CD8-positive, alpha-beta T cell (primary cell): ENCODE measurements at regions of chr6 and their contacts with region 1.

Region 1: GRCh38 chr6:108835218-108835850 is 12.9 kb upstream of the ARMC2 start:
- DNase-seq: peak; percentile 66 to 90 (median 85)
- ATAC-seq: peak; percentile 99
- H3K4me3 ChIP-seq: no peak overlapping the region
- H3K4me3 Mint-ChIP-seq: no peak overlapping the region
- H3K27ac ChIP-seq: no peak overlapping the region
- H3K27ac Mint-ChIP-seq: no peak overlapping the region
- H3K4me1 ChIP-seq: peaks cover 14% of the 10 kb centered on the region
- H3K4me1 Mint-ChIP-seq: peaks cover 23% of the 10 kb centered on the region
- H3K27me3 ChIP-seq: no peaks in the 10 kb centered on the region
- H3K27me3 Mint-ChIP-seq: no peaks in the 10 kb centered on the region
- CTCF ChIP-seq: peak; percentile 89

Region 2: DNA sequence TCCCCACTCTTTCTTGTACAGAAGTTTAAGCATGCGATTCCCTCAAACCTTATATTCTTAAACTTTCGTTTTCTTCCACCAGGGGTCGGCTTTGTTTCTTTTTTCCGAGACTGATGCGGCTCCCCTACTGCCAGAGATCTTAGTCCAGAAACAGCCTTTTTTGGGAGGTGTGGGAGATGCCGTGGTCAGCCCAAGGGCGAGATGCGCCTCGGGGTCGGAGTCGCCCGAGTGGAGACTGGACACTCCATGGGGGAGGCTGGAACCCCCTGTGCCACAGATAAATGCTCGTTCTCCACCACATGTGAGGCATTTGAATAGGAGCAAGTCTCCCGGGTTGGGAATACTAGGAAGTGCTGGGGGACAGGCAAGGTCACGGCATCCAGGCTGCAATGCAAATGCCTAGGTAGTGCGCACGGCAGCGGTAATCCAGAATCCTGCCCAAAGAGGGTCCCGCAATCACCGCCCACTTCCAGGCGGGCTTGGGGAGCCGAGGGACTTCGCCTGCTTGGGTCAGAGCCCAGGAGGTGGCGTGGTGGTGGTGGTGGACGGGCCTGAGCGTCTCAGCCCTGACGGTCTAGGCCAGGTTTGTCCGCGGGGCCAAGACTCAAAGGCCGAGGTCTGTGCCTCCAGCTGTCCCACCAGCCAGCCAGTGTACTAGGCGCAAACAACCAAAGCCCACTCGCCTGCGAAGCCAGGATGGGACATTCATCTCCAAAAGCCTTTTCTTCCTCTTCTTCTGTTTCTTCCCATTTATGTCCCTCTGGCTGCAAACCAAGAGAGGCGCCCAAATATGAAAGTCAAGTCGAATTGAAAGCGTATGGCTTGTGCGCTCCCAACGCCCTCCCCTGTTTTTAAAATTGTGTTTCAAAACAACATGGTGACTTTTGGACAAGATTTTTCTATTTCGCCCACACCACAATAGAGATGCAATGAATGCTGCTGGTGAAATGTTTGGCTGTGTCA is 721.5 kb before region 1 on chr6:
- CTCF ChIA-PET with region 1: no interaction called
- POLR2A ChIA-PET with region 1: no interaction called
- intact Hi-C with region 1: loop called in 1 of 2 experiments (anchors 10 kb)
- DNase-seq: peak in 2 of 9 experiments; percentile 43 to 49
- ATAC-seq: no peak
- H3K4me3 ChIP-seq: peak overlapping the region in 1 of 2 experiments; percentile 29
- H3K4me3 Mint-ChIP-seq: peak overlapping the region; percentile 64
- H3K27ac ChIP-seq: no peak overlapping the region
- H3K27ac Mint-ChIP-seq: no peak overlapping the region
- H3K4me1 ChIP-seq: peaks cover 40% of the 10 kb centered on the region
- H3K4me1 Mint-ChIP-seq: peaks cover 41% of the 10 kb centered on the region
- H3K27me3 ChIP-seq: peaks cover 36 to 43% of the 10 kb centered on the region in 2 experiments
- H3K27me3 Mint-ChIP-seq: peaks cover 74% of the 10 kb centered on the region
- CTCF ChIP-seq: peak; percentile 50

Region 3: GRCh38 chr6:108541838-108542759 is 293.2 kb before region 1 on chr6:
- CTCF ChIA-PET with region 1: interaction called, 62 read pairs
- POLR2A ChIA-PET with region 1: no interaction called
- intact Hi-C with region 1: loop called (anchors 1 kb)
- DNase-seq: peak; percentile 39 to 87 (median 69)
- ATAC-seq: peak; percentile 92
- H3K4me3 ChIP-seq: no peak overlapping the region
- H3K4me3 Mint-ChIP-seq: no peak overlapping the region
- H3K27ac ChIP-seq: no peak overlapping the region
- H3K27ac Mint-ChIP-seq: no peak overlapping the region
- H3K4me1 ChIP-seq: peaks cover 12% of the 10 kb centered on the region
- H3K4me1 Mint-ChIP-seq: peaks cover 16% of the 10 kb centered on the region
- H3K27me3 ChIP-seq: no peaks in the 10 kb centered on the region
- H3K27me3 Mint-ChIP-seq: no peaks in the 10 kb centered on the region
- CTCF ChIP-seq: peak; percentile 95

Region 4: GRCh38 chr6:108782179-108783041 is 52.9 kb before region 1 on chr6:
- CTCF ChIA-PET with region 1: interaction called, 4 read pairs
- POLR2A ChIA-PET with region 1: no interaction called
- intact Hi-C with region 1: loop called (anchors 1 to 2 kb)
- DNase-seq: peak; percentile 55 to 86 (median 78)
- ATAC-seq: peak; percentile 100
- H3K4me3 ChIP-seq: peak overlapping the region; percentile 56
- H3K4me3 Mint-ChIP-seq: peak overlapping the region; percentile 85
- H3K27ac ChIP-seq: no peak overlapping the region
- H3K27ac Mint-ChIP-seq: no peak overlapping the region
- H3K4me1 ChIP-seq: peaks cover 6% of the 10 kb centered on the region
- H3K4me1 Mint-ChIP-seq: peaks cover 8% of the 10 kb centered on the region
- H3K27me3 ChIP-seq: no peaks in the 10 kb centered on the region
- H3K27me3 Mint-ChIP-seq: no peaks in the 10 kb centered on the region
- CTCF ChIP-seq: peak; percentile 69

Region 5: GRCh38 chr6:108848116-108848868 is 13.0 kb after region 1 on chr6 and contains the start of gene ARMC2:
- CTCF ChIA-PET with region 1: interaction called, 21 read pairs
- POLR2A ChIA-PET with region 1: interaction called, 16 read pairs
- intact Hi-C with region 1: no loop called
- DNase-seq: peak; percentile 65 to 94 (median 85)
- ATAC-seq: peak; percentile 88
- H3K4me3 ChIP-seq: peak within 1 kb of the TSS; percentile 63 to 80
- H3K4me3 Mint-ChIP-seq: peak within 1 kb of the TSS; percentile 88
- H3K27ac ChIP-seq: peak within 1 kb of the TSS; percentile 67 to 73
- H3K27ac Mint-ChIP-seq: peak within 1 kb of the TSS; percentile 66
- H3K4me1 ChIP-seq: peaks cover 11% of the 10 kb centered on the region
- H3K4me1 Mint-ChIP-seq: peaks cover 29% of the 10 kb centered on the region
- H3K27me3 ChIP-seq: no peaks in the 10 kb centered on the region
- H3K27me3 Mint-ChIP-seq: no peaks in the 10 kb centered on the region
- CTCF ChIP-seq: no peak
- total RNA-seq, gene ARMC2: 4.2 to 6.1 TPM